Activated B cell treated with CpG ODN at 0.5 μM for 24 hours (primary cell): ENCODE measurements at regions of chr22 and their contacts with region 1.

Region 1: DNA sequence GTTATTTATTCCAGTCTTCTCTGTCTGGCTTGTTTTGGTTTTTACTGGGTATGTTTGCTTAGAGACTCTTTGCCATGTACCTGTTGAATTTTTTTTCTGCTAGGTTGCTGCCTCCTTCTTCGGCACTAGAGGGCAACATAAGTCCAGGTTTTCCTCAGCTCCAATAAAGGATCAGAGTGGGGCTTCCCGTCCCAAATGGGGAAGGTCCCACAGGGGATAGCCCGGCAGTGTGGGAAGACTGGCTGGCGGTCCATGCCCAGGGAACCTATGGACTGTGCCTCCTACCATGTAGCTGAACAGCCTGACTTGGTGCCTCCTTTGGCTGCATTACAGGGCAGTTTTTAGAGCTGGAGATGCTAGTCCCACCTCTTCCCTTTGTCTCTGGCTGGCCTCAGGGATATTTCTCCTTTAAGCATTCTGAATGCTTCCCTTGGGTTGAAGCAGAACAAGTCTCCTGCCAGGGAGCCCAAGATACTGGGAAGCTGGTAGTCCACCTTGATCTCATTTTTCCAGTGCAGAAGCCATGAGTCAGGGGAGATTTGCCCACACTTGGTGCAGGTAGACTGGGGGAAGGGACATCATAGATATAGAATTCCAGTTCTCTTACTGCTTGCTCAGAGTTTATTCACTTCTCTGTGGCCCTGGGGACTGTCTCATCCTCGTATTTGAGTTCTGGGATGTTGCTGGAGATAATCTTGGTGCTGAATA is 60.2 kb downstream of the BRD1 start:
- DNase-seq: peak; percentile 15
- ATAC-seq: peak; percentile 68
- H3K4me3 Mint-ChIP-seq: no peak overlapping the region
- H3K27ac Mint-ChIP-seq: no peak overlapping the region
- H3K4me1 Mint-ChIP-seq: peaks cover 9% of the 10 kb centered on the region
- H3K27me3 Mint-ChIP-seq: no peaks in the 10 kb centered on the region
- CTCF ChIP-seq: no peak

Region 2: DNA sequence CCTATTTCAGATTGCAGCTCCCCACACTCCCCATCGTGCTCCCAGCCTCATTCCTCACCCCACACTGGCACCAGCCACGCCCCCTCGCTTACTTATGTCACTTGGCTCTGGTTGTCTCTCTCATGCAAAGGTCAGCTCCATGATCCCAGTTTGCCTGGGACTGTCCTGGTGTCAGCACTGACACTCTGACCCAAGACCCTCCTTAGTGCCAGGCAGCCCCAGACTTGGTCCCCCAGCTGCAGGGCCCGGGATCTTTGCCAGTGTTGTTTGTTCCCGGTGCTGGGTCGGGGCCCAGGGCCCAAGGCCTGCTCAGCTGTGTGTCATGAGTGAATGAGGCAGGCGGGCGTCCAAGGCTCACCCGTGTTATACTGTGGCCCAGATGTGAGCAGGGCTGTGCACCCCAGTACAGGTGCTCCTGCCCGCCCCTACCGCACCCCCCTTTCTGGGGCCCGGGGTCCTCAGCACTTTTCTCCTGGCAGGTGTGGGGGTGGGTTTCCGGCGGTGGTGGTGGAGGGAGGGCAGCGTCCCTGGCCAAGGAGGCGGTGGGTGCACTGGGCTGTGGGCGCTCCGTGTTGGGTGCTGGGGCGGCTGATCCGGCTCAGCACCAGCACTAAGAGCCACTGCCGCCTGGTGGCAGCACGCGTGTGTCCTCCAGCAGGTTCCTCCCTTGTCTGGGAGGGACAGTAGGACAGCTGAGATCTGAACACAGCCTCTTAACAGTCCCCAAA is 225.6 kb after region 1 on chr22:
- CTCF ChIA-PET with region 1: no interaction called
- POLR2A ChIA-PET with region 1: no interaction called
- intact Hi-C with region 1: loop called (anchors 1 kb)
- DNase-seq: peak; percentile 61
- ATAC-seq: peak; percentile 98
- H3K4me3 Mint-ChIP-seq: peak overlapping the region; percentile 41
- H3K27ac Mint-ChIP-seq: peak overlapping the region; percentile 54
- H3K4me1 Mint-ChIP-seq: peaks cover 13% of the 10 kb centered on the region
- H3K27me3 Mint-ChIP-seq: no peaks in the 10 kb centered on the region
- CTCF ChIP-seq: no peak

Region 3: DNA sequence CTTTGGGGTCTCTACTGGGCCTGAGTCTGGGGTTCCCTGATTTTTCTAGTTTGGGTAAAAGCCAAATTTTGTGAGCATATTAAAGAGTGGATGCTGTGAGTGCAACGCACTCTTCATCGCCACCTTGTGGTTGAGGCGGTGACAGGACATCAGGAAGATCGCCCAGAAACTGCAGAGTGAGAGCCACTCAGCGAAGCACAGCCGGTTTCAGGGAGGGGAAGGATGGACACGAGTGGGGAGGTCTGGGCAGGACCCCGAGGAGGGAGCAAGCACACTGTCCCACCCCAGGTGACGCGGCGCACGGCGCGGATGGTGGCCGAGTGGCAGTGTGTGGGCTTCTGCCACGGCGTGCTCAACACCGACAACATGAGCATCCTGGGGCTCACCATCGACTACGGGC is 442.4 kb after region 1 on chr22:
- CTCF ChIA-PET with region 1: interaction called, 4 read pairs
- POLR2A ChIA-PET with region 1: no interaction called
- intact Hi-C with region 1: loop called (anchors 1 kb)
- DNase-seq: peak; percentile 60
- ATAC-seq: peak; percentile 54
- H3K4me3 Mint-ChIP-seq: no peak overlapping the region
- H3K27ac Mint-ChIP-seq: peak overlapping the region; percentile 35
- H3K4me1 Mint-ChIP-seq: peaks cover 27% of the 10 kb centered on the region
- H3K27me3 Mint-ChIP-seq: no peaks in the 10 kb centered on the region
- CTCF ChIP-seq: no peak